Brain microvascular endothelial cell (primary cell): ENCODE measurements at regions of chr5 and their contacts with region 1.

Region 1: DNA sequence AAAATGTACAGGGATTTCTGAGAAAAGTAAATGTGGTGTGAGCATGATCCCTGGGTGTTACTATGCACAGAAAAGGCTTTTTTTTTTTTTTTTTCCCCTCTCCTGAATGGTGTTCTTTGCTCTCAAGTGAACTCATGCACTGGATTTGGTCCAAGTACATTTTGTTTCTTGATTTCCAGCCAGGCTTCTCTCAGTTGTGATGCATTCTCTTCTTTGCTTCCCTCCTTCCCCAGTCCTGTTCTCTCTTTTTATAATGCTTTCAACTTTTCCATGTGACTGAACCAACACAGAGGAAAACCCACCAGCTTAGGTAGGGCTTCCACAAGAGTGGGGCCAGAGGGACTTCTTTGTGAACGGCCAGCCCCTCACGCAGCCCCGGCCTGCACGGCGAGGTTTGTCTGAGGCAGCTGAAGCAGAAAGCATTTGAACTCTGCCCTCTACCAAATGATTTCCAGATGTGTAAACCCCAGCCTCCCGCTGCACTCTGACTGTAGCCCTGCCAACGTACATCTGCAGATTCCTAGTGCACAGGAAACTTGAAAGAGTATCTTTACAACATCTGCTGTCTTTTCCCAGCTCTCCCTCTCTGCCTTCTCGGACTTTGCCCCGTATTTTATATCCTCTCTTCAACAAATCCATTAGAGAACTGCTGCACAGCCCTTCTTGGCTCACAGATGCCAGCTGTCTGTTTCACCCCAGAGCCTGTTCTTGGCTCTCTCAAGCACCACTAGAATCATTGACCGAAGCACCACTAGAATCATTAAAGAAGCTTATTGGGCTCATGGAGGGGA is 71.8 kb upstream of the CD180 start:
- DNase-seq: peak; percentile 91
- H3K4me3 ChIP-seq: peak overlapping the region; percentile 26
- H3K27ac ChIP-seq: peak overlapping the region; percentile 88
- H3K27me3 ChIP-seq: no peaks in the 10 kb centered on the region
- CTCF ChIP-seq: no peak

Region 2: GRCh38 chr5:66582499-66583165 is 685.8 kb before region 1 on chr5:
- in situ Hi-C with region 1: no loop called
- DNase-seq: peak; percentile 24
- H3K4me3 ChIP-seq: no peak overlapping the region
- H3K27ac ChIP-seq: no peak overlapping the region
- H3K27me3 ChIP-seq: no peaks in the 10 kb centered on the region
- CTCF ChIP-seq: no peak

Region 3: GRCh38 chr5:66617226-66617861 is 651.1 kb before region 1 on chr5:
- in situ Hi-C with region 1: no loop called
- DNase-seq: no peak
- H3K4me3 ChIP-seq: no peak overlapping the region
- H3K27ac ChIP-seq: no peak overlapping the region
- H3K27me3 ChIP-seq: no peaks in the 10 kb centered on the region
- CTCF ChIP-seq: no peak

Region 4: GRCh38 chr5:67395790-67396418 is 127.5 kb after region 1 on chr5:
- in situ Hi-C with region 1: no loop called
- DNase-seq: no peak
- H3K4me3 ChIP-seq: no peak overlapping the region
- H3K27ac ChIP-seq: no peak overlapping the region
- H3K27me3 ChIP-seq: no peaks in the 10 kb centered on the region
- CTCF ChIP-seq: no peak

Region 5: GRCh38 chr5:67543720-67544270 is 275.4 kb after region 1 on chr5:
- in situ Hi-C with region 1: no loop called
- DNase-seq: no peak
- H3K4me3 ChIP-seq: no peak overlapping the region
- H3K27ac ChIP-seq: no peak overlapping the region
- H3K27me3 ChIP-seq: no peaks in the 10 kb centered on the region
- CTCF ChIP-seq: no peak

Region 6: GRCh38 chr5:68252673-68253623 is 984.5 kb after region 1 on chr5:
- in situ Hi-C with region 1: loop called (anchors 25 kb)
- DNase-seq: peak; percentile 67
- H3K4me3 ChIP-seq: no peak overlapping the region
- H3K27ac ChIP-seq: no peak overlapping the region
- H3K27me3 ChIP-seq: no peaks in the 10 kb centered on the region
- CTCF ChIP-seq: peak; percentile 90